HAP-1 (cell line): ENCODE measurements at regions of chr2 and their contacts with region 1.

Region 1: GRCh38 chr2:63698825-63699548 is 110.2 kb downstream of the MDH1 start:
- DNase-seq: peak; percentile 35 to 51
- H3K4me3 ChIP-seq: no peak overlapping the region
- H3K4me1 ChIP-seq: no peaks in the 10 kb centered on the region
- H3K27me3 ChIP-seq: no peaks in the 10 kb centered on the region

Region 2: DNA sequence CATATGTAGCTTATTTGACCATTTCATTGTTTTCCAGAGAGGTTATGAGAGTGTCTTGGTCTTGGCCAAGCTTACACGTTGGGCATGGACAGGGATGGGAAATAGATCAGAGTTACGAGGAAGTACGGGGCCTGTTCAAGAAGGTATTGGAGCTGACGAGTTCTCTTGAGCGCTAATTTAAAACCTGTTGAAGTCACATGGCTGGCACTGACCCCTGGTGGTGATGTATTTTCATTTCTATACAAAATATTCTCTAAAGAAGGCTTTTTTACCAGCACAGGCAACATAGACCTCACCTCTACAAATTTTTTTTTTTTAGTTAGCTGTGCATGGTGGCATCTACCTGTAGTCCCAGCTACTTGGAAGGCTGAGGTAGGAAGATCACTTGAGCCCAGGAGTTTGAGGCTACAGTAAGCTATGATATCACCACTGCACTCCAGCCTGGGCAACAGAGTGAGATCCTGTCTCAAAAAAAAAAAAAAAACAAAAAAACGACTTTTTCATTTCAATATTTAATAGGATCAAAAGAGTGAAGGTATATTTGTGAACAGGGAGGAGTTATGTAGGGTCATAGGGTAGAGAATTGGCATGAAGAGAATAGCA is 162.3 kb after region 1 on chr2:
- in situ Hi-C with region 1: loop called (anchors 10 kb)
- DNase-seq: peak; percentile 67 to 71
- H3K4me3 ChIP-seq: no peak overlapping the region
- H3K4me1 ChIP-seq: no peaks in the 10 kb centered on the region
- H3K27me3 ChIP-seq: no peaks in the 10 kb centered on the region